Activated CD4-positive, alpha-beta memory T cell treated with anti-CD3 and anti-CD28 coated beads for 36 hours (primary cell): ENCODE measurements at regions of chr17 and their contacts with region 1.

Region 1: DNA sequence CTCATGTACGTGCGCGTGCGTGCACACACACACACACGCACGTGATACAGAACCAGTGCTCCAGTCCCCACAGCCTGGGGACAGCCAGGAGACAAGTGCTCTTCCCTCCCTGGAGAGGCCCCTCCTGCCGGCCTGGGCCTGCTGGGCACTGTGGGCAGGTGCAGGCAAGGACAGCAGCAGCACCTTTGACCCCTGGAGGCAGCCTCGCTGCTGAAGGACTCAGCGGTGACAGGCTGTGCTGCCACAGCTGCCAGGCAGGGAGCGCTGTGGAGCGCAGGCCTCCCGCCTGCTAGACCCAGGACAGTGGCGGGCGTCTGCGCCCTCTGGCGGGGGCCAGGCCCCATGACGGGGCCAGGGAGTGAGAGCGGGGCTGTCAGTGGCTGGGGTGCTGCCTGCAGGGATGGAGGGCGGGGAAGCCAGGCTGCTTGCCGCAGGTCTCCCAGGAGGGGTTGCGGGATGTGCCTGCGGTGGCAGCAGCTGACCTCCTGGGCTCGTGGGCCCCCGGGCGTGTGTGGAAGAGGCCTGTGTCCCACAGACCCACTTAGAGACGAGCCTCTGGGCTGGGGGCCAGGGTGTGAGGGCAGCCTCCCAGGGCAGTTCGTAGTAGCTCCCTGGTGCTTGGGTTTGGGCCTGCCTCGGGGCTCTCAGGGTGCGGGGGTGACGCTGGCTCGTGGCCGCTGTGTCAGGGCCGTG is 63.5 kb upstream of the PVALEF start:
- DNase-seq: peak; percentile 91
- H3K4me3 Mint-ChIP-seq: no peak overlapping the region
- H3K27ac Mint-ChIP-seq: no peak overlapping the region
- H3K4me1 Mint-ChIP-seq: peaks cover 15% of the 10 kb centered on the region
- H3K27me3 Mint-ChIP-seq: no peaks in the 10 kb centered on the region

Region 2: GRCh38 chr17:81086789-81087551 is 14.8 kb before region 1 on chr17:
- CTCF ChIA-PET with region 1: interaction called, 10 read pairs
- POLR2A ChIA-PET with region 1: interaction called, 3 read pairs
- intact Hi-C with region 1: no loop called
- DNase-seq: peak; percentile 16
- H3K4me3 Mint-ChIP-seq: no peak overlapping the region
- H3K27ac Mint-ChIP-seq: no peak overlapping the region
- H3K4me1 Mint-ChIP-seq: no peaks in the 10 kb centered on the region
- H3K27me3 Mint-ChIP-seq: no peaks in the 10 kb centered on the region

Region 3: DNA sequence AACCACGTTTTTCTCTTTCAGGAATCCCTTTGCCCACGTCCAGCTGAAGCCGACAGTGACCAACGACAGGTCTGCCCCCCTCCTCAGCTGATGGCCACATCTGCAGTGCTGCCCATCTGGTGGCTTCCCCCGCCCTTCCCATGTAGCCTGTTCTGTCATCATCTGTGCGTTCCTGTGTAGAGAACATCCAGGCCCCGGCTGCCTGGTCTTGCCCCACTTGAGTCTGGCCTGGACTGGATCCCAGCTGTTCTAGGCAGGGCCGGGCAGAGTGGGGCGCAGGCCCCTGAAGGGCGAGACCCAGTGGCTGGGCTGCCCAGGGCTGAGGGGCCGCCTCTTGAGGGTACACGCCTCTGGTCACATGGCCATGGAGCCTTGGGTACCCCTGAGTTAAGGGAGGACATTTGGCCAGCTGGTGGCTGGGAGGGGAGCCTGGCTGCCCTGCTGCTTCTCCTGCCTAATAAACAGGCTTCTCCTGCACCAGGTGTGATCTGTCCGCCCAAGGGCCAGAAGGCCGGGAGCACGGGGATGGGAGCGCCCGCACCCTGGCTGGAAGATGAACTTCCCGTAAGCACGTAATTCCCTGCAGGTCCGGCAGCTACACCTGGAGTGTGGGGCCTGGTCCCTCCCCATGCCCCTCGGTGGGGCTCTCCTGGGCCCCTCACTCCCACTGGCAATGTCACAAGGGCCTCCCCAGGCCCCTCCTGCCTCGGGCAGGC is 14.1 kb after region 1 on chr17:
- CTCF ChIA-PET with region 1: interaction called, 12 read pairs
- POLR2A ChIA-PET with region 1: no interaction called
- intact Hi-C with region 1: no loop called
- DNase-seq: no peak
- H3K4me3 Mint-ChIP-seq: no peak overlapping the region
- H3K27ac Mint-ChIP-seq: no peak overlapping the region
- H3K4me1 Mint-ChIP-seq: peaks cover 5% of the 10 kb centered on the region
- H3K27me3 Mint-ChIP-seq: no peaks in the 10 kb centered on the region

Region 4: DNA sequence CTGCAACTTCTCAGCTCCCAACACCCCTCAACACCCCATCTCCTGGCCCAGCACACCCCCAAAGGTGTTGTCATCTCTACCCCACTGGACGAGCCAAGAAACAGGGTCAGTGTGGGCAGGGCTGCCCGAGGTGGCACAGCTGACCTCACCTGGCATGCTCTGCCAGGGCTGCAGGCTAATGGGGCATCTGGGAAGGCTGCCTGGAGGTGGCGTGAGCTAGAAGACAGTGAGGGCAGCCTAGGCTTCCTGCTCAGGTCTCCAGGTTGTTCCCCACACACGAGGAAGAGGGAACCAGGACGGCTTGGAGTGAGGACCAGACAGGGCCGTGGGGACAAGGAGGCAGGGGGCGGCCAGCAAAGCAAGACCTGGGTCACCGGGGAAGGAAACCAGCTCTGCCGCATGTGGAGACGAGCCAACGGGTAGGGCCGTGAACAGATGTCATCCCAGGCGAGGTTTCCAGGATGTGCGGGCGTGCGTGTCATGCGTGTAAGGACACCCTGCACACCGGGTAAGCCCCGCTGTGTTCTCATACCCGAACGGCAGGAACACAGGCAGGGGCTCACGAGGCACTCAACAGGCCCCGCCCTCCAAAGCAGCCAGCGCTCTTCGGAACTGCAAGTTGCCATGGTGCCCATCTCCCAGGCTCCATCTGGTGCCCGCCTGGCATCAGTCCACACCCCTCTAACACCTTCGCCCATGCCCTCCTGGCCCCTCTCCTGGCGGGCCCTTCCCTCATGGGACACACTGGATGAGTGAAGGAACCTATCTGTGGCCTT is 33.9 kb after region 1 on chr17:
- CTCF ChIA-PET with region 1: no interaction called
- POLR2A ChIA-PET with region 1: no interaction called
- intact Hi-C with region 1: no loop called
- DNase-seq: no peak
- H3K4me3 Mint-ChIP-seq: no peak overlapping the region
- H3K27ac Mint-ChIP-seq: no peak overlapping the region
- H3K4me1 Mint-ChIP-seq: no peaks in the 10 kb centered on the region
- H3K27me3 Mint-ChIP-seq: peaks cover 2% of the 10 kb centered on the region

Region 5: GRCh38 chr17:81354954-81355347 is 253.2 kb after region 1 on chr17:
- CTCF ChIA-PET with region 1: no interaction called
- POLR2A ChIA-PET with region 1: no interaction called
- intact Hi-C with region 1: no loop called
- DNase-seq: no peak
- H3K4me3 Mint-ChIP-seq: no peak overlapping the region
- H3K27ac Mint-ChIP-seq: no peak overlapping the region
- H3K4me1 Mint-ChIP-seq: no peaks in the 10 kb centered on the region
- H3K27me3 Mint-ChIP-seq: peaks cover 14% of the 10 kb centered on the region